PC-3 (cell line): ENCODE measurements at regions of chr3 and their contacts with region 1.

Region 1: DNA sequence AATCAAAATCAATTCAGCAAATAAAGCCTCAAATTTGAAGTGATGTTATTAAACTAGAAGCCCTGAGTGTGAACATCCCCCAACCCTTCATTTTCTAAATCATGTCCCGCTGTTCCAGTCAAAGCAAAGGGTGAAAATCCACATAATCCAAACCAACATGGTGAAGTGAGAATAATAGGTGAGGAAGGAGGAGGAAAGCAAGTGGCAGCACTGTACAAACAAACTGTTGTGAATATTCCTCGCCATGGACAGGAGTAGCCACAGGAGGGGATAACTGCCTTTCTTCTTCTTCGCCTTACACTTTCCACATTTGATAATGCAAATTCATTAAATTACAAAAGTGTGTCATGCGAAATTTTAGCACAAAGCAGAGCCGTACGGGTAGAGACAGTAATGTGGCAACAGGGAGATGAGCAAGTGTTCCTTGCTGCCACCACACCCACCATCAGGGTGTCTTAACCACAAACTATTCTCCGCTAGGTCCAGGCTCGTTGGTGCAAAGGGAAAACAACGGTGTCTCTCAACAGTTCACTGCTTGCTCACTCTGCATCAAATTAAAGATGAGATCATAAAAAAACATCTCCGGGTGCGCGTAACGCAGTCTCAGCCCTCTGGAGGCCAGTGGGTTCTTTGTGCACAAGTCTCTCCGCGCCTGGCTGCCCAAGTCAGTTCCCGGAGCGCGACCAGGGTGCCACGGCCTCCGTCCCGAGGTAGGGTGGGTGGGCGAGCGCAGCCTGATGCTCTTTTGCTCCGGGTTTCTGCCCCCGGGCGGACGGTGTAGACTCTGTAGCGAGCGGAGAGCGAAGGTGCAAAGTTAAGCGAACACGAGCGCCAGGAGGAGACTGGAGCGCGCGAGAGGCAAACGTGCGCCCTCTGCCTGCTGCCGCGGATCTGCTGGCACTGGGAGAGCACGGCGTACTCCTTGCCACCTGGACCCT is 6.8 kb downstream of the EPHA3 start:
- DNase-seq: peak; percentile 69
- ATAC-seq: peak; percentile 98
- H3K4me3 ChIP-seq: peak overlapping the region; percentile 66
- H3K27ac ChIP-seq: no peak overlapping the region
- H3K4me1 ChIP-seq: no peaks in the 10 kb centered on the region
- H3K27me3 ChIP-seq: peaks cover 42% of the 10 kb centered on the region
- CTCF ChIP-seq: peak; percentile 81

Region 2: GRCh38 chr3:88795502-88795901 is 318.7 kb before region 1 on chr3:
- CTCF ChIA-PET with region 1: no interaction called
- POLR2A ChIA-PET with region 1: no interaction called
- intact Hi-C with region 1: no loop called
- DNase-seq: no peak
- ATAC-seq: no peak
- H3K4me3 ChIP-seq: no peak overlapping the region
- H3K27ac ChIP-seq: no peak overlapping the region
- H3K4me1 ChIP-seq: no peaks in the 10 kb centered on the region
- H3K27me3 ChIP-seq: no peaks in the 10 kb centered on the region
- CTCF ChIP-seq: no peak

Region 3: GRCh38 chr3:89198591-89198990 is 84.4 kb after region 1 on chr3:
- CTCF ChIA-PET with region 1: no interaction called
- POLR2A ChIA-PET with region 1: no interaction called
- intact Hi-C with region 1: no loop called
- DNase-seq: no peak
- ATAC-seq: no peak
- H3K4me3 ChIP-seq: no peak overlapping the region
- H3K27ac ChIP-seq: no peak overlapping the region
- H3K4me1 ChIP-seq: no peaks in the 10 kb centered on the region
- H3K27me3 ChIP-seq: peaks cover 38% of the 10 kb centered on the region
- CTCF ChIP-seq: no peak

Region 4: GRCh38 chr3:89851974-89852621 is 737.9 kb after region 1 on chr3:
- CTCF ChIA-PET with region 1: no interaction called
- POLR2A ChIA-PET with region 1: no interaction called
- intact Hi-C with region 1: loop called (anchors 5 kb)
- DNase-seq: peak; percentile 76
- ATAC-seq: peak; percentile 73
- H3K4me3 ChIP-seq: no peak overlapping the region
- H3K27ac ChIP-seq: no peak overlapping the region
- H3K4me1 ChIP-seq: no peaks in the 10 kb centered on the region
- H3K27me3 ChIP-seq: 0 out of 2 replicates have a peak, but pooled peaks cover 11% of the 10 kb centered on the region
- CTCF ChIP-seq: peak; percentile 92

Region 5: GRCh38 chr3:90091204-90091924 is 977.2 kb after region 1 on chr3:
- CTCF ChIA-PET with region 1: no interaction called
- POLR2A ChIA-PET with region 1: no interaction called
- intact Hi-C with region 1: loop called (anchors 10 kb)
- DNase-seq: peak; percentile 59
- ATAC-seq: peak; percentile 92
- H3K4me3 ChIP-seq: no peak overlapping the region
- H3K27ac ChIP-seq: no peak overlapping the region
- H3K4me1 ChIP-seq: no peaks in the 10 kb centered on the region
- H3K27me3 ChIP-seq: no peaks in the 10 kb centered on the region; the same call in 1 of the 2 replicates
- CTCF ChIP-seq: peak; percentile 68